Natural killer cell (primary cell): ENCODE measurements at regions of chr7 and their contacts with region 1.

Region 1: DNA sequence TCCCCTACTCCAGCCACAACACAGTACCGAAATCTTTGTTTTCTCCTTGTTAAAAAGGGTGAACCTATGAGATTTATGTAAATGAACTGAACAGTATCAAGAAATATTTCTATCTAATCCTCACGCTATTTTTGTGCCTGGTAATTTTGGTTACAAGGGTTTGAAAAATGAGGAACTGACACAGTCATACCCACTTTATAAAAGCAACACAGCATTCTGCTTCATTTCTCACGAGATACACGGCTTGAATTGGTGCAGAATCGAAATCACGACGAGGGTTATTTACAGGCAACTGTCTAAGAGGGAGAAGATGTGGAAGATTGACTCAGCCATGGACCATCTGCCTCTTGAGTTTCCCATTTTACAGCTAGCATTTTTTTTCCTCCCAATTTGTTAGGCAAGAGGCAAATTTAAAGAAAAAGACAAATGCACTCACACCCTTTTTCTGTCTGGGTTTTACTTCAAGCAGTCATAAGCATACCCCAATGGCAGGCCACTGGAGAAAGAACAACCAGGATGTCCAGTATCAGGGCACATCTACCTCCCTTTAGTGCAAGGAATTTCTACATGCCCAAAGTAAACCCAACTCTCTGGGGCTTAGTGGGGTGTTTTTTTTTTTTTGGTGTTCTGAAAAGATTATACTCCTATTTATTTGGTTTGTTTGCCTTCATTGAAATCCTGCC is 108.1 kb downstream of the ITGB8 start:
- DNase-seq: peak in 1 of 2 donors; percentile 4
- ATAC-seq: no peak
- H3K4me3 ChIP-seq: no peak overlapping the region
- H3K4me3 Mint-ChIP-seq: no peak overlapping the region
- H3K27ac ChIP-seq: no peak overlapping the region
- H3K27ac Mint-ChIP-seq: no peak overlapping the region
- H3K4me1 ChIP-seq: no peaks in the 10 kb centered on the region
- H3K4me1 Mint-ChIP-seq: no peaks in the 10 kb centered on the region
- H3K27me3 ChIP-seq: no peaks in the 10 kb centered on the region
- H3K27me3 Mint-ChIP-seq: no peaks in the 10 kb centered on the region
- CTCF ChIP-seq: no peak

Region 2: GRCh38 chr7:20374392-20374791 is 64.4 kb before region 1 on chr7:
- intact Hi-C with region 1: loop called (anchors 10 kb)
- DNase-seq: no peak
- ATAC-seq: no peak
- H3K4me3 ChIP-seq: no peak overlapping the region
- H3K4me3 Mint-ChIP-seq: no peak overlapping the region
- H3K27ac ChIP-seq: no peak overlapping the region
- H3K27ac Mint-ChIP-seq: no peak overlapping the region
- H3K4me1 ChIP-seq: no peaks in the 10 kb centered on the region
- H3K4me1 Mint-ChIP-seq: no peaks in the 10 kb centered on the region
- H3K27me3 ChIP-seq: no peaks in the 10 kb centered on the region
- H3K27me3 Mint-ChIP-seq: no peaks in the 10 kb centered on the region
- CTCF ChIP-seq: no peak

Region 3: DNA sequence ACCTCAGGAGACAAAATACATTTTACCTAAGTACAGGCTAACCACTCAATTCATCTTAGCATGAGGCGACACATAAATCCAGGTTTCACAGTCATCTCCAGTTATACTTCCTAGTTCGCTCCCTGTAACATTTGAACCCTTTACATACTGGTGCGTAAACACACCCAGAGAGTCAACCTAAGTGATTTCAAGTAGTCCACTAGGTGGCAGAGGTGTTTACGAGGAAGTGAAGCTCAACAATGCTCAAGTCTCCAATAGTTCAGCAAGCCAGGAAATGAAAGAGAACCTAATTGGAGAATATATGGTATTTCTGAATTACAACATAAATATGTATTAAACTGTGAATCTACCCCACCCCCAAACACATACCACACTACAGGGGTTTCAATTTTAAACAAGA is 100.4 kb after region 1 on chr7:
- intact Hi-C with region 1: no loop called
- DNase-seq: no peak
- ATAC-seq: no peak
- H3K4me3 ChIP-seq: no peak overlapping the region
- H3K4me3 Mint-ChIP-seq: no peak overlapping the region
- H3K27ac ChIP-seq: no peak overlapping the region
- H3K27ac Mint-ChIP-seq: no peak overlapping the region
- H3K4me1 ChIP-seq: no peaks in the 10 kb centered on the region
- H3K4me1 Mint-ChIP-seq: no peaks in the 10 kb centered on the region
- H3K27me3 ChIP-seq: no peaks in the 10 kb centered on the region
- H3K27me3 Mint-ChIP-seq: no peaks in the 10 kb centered on the region
- CTCF ChIP-seq: no peak